ENCODE measurements at regions of chr3 and their contacts with region 1.

Region 1: DNA sequence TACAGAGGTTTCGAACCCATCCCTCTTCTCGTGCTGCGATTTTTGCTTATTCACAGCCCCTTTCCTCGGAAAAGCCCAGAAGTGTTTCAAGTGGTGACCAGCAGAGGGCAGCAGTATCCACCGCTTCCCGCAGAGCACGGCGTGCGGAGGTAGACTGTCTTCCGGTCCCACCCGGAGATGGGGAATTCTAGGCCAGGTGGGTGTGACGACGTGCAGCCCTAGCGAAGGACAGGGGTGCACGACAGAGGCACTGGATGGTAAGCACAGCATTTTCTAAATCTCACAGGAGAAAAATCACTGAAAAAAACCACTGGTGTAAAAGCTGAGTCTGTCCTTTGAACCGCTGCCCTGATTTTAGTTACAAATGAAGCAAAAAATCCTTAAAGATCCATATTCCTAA is 7.4 kb upstream of the PSMD6 start:
- DNase-seq: peak; percentile 90

Region 2: GRCh38 chr3:64345371-64345770 is 314.6 kb after region 1 on chr3:
- intact Hi-C with region 1: loop called (anchors 5 kb)
- DNase-seq: no peak

Region 3: GRCh38 chr3:64484289-64484992 is 453.7 kb after region 1 on chr3:
- intact Hi-C with region 1: loop called (anchors 1 kb)
- DNase-seq: peak; percentile 84